CD8-positive, alpha-beta memory T cell (primary cell): ENCODE measurements at regions of chr19 and their contacts with region 1.

Region 1: GRCh38 chr19:32265995-32266394 is 79.4 kb upstream of the ZNF507 start:
- DNase-seq: no peak
- H3K4me3 ChIP-seq: no peak overlapping the region
- H3K4me3 Mint-ChIP-seq: no peak overlapping the region
- H3K27ac ChIP-seq: no peak overlapping the region
- H3K27ac Mint-ChIP-seq: no peak overlapping the region
- H3K4me1 ChIP-seq: no peaks in the 10 kb centered on the region
- H3K4me1 Mint-ChIP-seq: no peaks in the 10 kb centered on the region
- H3K27me3 ChIP-seq: no peaks in the 10 kb centered on the region
- H3K27me3 Mint-ChIP-seq: peaks cover 9 to 28% of the 10 kb centered on the region in 2 donors

Region 2: DNA sequence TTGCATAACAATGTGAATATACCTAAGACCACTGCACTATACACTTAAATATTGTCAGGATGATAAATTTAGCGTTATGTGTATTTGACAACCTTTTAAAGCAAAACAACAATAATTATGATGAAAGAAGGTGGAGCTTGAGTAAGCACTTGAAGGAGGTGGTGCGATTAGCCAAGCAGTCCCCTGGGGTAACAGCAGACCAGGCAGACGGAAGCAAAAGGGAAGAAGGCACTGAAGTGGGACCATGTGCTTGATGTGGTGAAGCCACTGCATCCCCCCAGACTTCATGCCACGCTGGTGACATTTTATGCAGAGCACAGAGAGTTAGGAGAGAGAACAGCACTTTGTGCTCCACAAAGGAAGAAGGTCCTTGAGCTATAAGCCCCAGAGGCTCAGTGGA is 21.1 kb after region 1 on chr19:
- CTCF ChIA-PET with region 1: no interaction called
- POLR2A ChIA-PET with region 1: interaction called, 11 read pairs
- DNase-seq: no peak
- H3K4me3 ChIP-seq: no peak overlapping the region
- H3K4me3 Mint-ChIP-seq: no peak overlapping the region
- H3K27ac ChIP-seq: no peak overlapping the region
- H3K27ac Mint-ChIP-seq: no peak overlapping the region
- H3K4me1 ChIP-seq: no peaks in the 10 kb centered on the region
- H3K4me1 Mint-ChIP-seq: no peaks in the 10 kb centered on the region
- H3K27me3 ChIP-seq: no peaks in the 10 kb centered on the region
- H3K27me3 Mint-ChIP-seq: peaks cover 7 to 35% of the 10 kb centered on the region in 2 donors